GM12878 (cell line): ENCODE measurements at regions of chr7 and their contacts with region 1.

Region 1: DNA sequence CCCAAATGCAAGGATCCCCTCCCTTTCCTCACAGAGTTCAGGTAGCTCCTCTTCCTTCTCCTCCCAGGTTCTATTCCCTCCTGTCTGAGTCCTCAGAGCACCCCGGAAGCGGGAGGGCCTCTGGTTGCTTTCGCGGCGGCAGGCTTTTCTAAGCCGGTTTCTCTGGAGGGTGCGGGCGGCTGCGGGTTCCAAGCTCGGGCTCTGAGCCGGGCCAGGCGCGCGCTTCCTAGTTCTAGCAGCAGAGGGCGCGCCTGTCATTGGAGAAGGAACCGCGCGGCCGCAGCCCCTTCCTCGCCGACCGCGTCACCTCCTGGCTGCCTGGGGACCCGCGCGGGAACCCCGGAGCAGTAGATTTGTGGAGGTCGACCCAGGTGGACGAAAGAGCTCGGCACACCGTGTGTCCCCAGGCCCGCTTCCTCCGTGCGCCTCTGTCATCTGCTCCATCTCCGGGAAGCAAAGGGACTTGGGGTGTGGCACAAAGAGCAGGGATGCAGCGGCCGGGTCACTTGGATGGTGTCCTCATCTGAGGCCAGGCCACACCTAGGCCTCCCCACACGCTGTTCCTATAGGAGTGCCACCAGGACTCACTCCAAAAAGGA is 389.0 kb upstream of the PODXL start:
- DNase-seq: no peak
- ATAC-seq: peak; percentile 91
- H3K4me3 ChIP-seq: no peak overlapping the region
- H3K27ac ChIP-seq: no peak overlapping the region
- H3K4me1 ChIP-seq: no peaks in the 10 kb centered on the region; the same call in 1 of the 2 replicates
- H3K27me3 ChIP-seq: peaks cover 1 to 3% of the 10 kb centered on the region in 2 experiments; a peak in 1 of 4 replicates
- CTCF ChIP-seq: peak; percentile 64 to 76 (median 67)
- EP300 ChIP-seq: no peak
- POLR2A ChIP-seq: no peak
- RAD21 ChIP-seq: peak; percentile 76

Region 2: GRCh38 chr7:131890176-131890575 is 55.2 kb before region 1 on chr7:
- CTCF ChIA-PET with region 1: no interaction called
- POLR2A ChIA-PET with region 1: no interaction called
- RAD21 ChIA-PET with region 1: no interaction called
- SMC1A ChIA-PET with region 1: no interaction called
- in situ Hi-C with region 1: no loop called
- intact Hi-C with region 1: no loop called
- DNase-seq: no peak
- ATAC-seq: no peak
- H3K4me3 ChIP-seq: no peak overlapping the region
- H3K27ac ChIP-seq: no peak overlapping the region
- H3K4me1 ChIP-seq: no peaks in the 10 kb centered on the region
- H3K27me3 ChIP-seq: no peaks in the 10 kb centered on the region; a peak in 1 of 4 replicates
- CTCF ChIP-seq: no peak
- EP300 ChIP-seq: no peak
- POLR2A ChIP-seq: no peak
- RAD21 ChIP-seq: no peak

Region 3: DNA sequence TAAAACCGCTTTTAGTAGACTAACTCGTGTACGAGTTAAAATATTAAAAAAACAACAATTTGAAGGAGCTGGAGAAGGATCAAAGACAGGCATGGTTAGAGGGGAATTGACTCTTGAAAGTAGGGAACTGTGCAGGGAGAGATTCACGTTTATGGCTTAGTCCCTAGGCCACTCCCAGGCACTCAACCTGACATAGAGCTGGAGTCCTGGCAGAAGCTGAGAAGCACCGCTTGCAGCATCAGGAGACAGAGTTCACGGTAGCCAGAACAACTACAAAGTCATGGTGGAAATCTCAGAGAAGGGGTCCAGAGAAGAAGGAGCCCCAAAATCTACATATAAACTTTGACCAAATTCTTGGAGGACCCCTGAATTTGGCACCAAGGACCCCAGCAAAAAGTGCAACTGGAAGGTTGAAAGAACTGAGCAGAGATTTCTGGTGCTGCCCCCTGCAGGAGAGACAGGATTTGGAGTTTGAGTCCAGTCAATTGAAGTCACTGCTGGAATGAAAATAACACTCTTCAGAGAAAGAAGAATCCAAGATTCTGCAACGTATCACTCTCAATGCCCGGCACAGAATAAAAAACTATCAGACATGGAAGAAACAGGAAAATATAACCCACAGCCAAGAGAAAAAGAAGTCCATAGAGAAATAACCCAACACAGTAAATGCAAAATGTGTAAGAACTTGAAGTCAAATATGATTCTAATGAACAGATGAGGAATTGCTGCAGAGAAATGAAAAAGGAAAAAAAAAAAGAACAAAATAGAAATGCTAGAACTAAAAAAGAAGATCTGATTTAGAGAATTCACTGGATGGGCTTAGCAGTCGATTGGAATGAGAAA is 104.3 kb after region 1 on chr7:
- CTCF ChIA-PET with region 1: interaction called, 3 read pairs
- POLR2A ChIA-PET with region 1: no interaction called
- RAD21 ChIA-PET with region 1: interaction called, 3 read pairs
- SMC1A ChIA-PET with region 1: no interaction called
- in situ Hi-C with region 1: no loop called
- intact Hi-C with region 1: loop called (anchors 1 kb)
- DNase-seq: no peak
- ATAC-seq: peak; percentile 42; the same call in 1 of the 3 replicates
- H3K4me3 ChIP-seq: no peak overlapping the region
- H3K27ac ChIP-seq: no peak overlapping the region
- H3K4me1 ChIP-seq: no peaks in the 10 kb centered on the region
- H3K27me3 ChIP-seq: no peaks in the 10 kb centered on the region; a peak in 1 of 4 replicates
- CTCF ChIP-seq: peak; percentile 56 to 69 (median 67)
- EP300 ChIP-seq: no peak
- POLR2A ChIP-seq: no peak
- RAD21 ChIP-seq: peak; percentile 43

Region 4: DNA sequence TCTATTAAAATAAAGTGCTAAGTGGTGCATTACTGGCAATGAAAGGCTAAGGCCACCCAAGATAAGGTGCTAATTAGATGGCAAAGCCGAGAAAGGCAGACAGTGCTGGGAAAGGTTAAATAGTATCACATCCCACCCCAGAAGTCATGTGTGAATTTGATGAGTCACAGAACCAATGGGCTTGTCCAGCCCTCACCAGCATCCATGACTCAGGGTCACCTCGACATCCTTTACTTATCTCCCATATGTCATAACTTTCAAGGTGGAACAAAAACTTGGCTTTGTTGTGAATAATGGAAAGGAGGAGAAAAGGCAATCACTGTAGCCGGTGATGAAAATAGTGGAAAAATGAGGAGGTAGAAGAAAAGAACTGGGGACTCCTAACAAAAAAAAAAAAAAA is 171.8 kb after region 1 on chr7:
- CTCF ChIA-PET with region 1: no interaction called
- POLR2A ChIA-PET with region 1: no interaction called
- RAD21 ChIA-PET with region 1: no interaction called
- SMC1A ChIA-PET with region 1: no interaction called
- in situ Hi-C with region 1: no loop called
- intact Hi-C with region 1: no loop called
- DNase-seq: no peak
- ATAC-seq: no peak
- H3K4me3 ChIP-seq: no peak overlapping the region
- H3K27ac ChIP-seq: no peak overlapping the region
- H3K4me1 ChIP-seq: no peaks in the 10 kb centered on the region
- H3K27me3 ChIP-seq: no peaks in the 10 kb centered on the region; a peak in 2 of 4 replicates
- CTCF ChIP-seq: no peak
- EP300 ChIP-seq: no peak
- POLR2A ChIP-seq: no peak
- RAD21 ChIP-seq: no peak

Region 5: DNA sequence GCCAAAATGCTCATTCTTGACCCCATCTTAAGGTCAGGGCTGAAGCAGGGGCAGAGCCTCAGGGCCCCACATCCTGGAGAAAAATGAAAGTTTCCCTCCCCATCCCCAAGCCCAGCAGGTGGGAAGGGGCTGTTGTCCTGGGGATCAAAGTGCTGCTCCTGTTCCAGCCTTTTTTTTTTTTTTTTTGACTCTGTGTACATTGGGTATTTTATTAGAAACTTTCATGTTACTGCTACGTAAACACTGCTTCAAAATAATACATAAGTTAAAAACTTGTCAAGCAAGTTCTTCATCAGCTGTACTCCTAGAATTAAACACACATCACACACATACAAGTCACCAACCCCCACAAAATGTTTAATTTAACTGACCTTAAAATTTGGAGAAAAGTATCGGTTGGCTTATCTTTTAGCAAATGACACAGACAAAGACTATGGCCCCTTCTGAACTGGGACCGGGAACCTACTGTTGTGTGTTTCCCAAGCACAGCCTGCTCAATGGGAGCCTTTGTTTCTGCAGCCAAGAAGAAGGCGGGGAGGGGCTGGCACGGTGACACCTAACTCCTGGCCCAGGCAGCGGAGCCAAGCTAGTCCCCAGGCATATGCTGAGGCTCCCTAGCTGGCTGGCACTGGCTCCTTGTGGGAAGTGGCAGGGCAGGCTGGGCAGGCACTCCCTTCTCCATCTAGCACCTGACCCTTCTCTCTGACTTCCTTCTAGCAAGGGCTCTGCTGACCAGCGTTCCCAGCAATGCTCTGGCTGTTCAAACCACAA is 305.7 kb after region 1 on chr7:
- CTCF ChIA-PET with region 1: no interaction called
- POLR2A ChIA-PET with region 1: no interaction called
- RAD21 ChIA-PET with region 1: interaction called, 4 read pairs
- SMC1A ChIA-PET with region 1: interaction called, 3 read pairs
- in situ Hi-C with region 1: no loop called
- intact Hi-C with region 1: loop called (anchors 1 kb)
- DNase-seq: no peak
- ATAC-seq: no peak
- H3K4me3 ChIP-seq: no peak overlapping the region
- H3K27ac ChIP-seq: no peak overlapping the region
- H3K4me1 ChIP-seq: no peaks in the 10 kb centered on the region
- H3K27me3 ChIP-seq: no peaks in the 10 kb centered on the region; a peak in 1 of 4 replicates
- CTCF ChIP-seq: no peak
- EP300 ChIP-seq: no peak
- POLR2A ChIP-seq: no peak
- RAD21 ChIP-seq: no peak